ENCODE measurements at regions of chr6 and their contacts with region 1.

Region 1: DNA sequence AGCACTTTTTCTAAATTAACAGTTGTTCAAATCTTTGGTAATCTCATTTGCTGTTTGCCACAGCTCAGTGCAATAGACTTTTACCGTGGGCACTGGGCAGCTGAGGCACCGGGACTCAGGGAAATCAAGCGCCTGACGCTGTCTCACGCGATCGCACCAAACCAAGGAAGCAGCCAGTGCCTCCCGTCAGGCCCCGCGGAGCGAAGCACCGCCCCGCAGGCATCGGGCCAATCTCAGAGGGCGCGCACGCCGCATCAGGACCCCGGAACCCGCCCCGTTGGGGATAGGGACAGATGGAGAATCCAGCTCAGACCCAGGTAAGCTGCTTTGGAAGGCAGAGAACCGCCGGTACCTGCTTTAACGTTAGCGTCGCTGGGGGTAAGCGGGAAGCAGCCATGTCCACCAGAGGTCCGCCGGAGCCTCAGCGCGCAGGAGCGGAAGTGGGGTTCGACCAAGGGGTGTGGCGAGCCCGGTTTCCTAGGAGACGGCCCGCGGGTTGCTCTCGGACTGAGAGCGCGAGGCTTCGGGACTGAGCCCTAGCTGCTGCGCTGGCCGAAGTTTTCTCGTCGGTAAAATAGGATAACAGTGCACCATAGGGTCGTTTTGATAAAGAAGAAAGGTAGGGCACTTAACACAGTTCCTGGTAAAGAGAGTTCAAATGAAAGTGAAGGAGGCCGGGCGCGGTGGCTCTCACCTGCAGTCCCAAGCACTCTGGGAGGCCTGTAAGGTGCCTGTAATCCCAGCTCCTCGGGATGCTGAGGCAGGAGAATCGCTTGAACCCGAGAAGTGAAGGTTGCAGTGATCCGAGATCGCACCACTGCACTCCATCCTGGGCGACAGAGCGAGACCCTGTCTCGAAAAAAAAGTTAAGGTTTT is at the start of gene LYRM2:
- DNase-seq: peak; percentile 96
- ATAC-seq: peak; percentile 97
- H3K4me3 Mint-ChIP-seq: peak within 1 kb of the TSS; percentile 86
- H3K27ac Mint-ChIP-seq: peak within 1 kb of the TSS; percentile 98
- H3K4me1 Mint-ChIP-seq: peaks cover 22% of the 10 kb centered on the region
- H3K27me3 Mint-ChIP-seq: no peaks in the 10 kb centered on the region
- total RNA-seq, gene LYRM2: 24.5 to 27.9 TPM

Region 2: DNA sequence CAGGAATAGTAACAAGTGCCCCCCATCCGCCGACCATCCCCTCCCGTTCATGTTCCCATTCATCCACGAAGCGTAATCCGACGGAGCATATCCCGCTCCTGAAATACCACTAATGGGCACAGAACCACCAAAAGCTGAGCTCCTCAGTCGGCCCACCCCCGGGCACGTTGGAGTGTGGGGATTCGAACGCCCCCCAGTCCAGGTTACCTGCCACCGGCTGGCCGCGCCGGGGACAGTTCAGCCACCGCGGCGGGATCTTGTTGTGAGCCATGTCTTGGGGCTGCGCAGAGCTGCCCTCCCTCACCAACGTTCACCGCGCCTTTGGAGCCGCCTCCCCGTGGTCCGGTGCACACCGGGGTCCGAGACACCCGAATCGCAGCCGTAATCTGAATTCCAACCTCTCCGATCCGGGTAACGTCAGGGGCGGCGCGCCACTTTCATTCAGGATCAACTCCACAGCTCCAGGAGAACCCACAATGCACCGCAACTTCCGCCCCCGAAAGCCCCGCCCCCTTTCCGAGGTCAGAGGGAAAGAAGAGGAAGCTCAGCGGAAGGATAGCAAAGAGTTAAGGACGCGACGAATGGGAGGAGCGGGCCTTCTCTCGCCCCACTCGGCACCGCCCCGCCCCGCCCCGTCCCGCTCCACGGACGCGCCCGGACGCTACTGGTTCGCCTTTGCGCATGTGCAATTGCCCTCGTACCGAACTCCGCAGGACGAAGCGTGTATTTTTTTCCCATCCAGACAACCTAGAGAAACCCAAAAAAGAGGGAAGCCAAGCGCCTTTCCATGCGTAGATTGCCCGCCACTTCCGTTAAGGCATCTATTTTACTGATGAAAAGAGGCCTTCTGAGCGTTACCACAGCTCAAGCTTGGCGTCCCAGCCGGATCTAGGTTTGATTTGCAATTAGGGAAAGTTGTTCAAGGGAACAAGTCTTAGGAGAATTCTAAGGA is 675.1 kb before region 1 on chr6 and contains the start of gene RNGTT:
- CTCF ChIA-PET with region 1: no interaction called
- POLR2A ChIA-PET with region 1: interaction called, 3 read pairs
- intact Hi-C with region 1: loop called in 1 of 2 experiments (anchors 1 kb)
- DNase-seq: peak; percentile 99
- ATAC-seq: peak; percentile 100
- H3K4me3 Mint-ChIP-seq: peak within 1 kb of the TSS; percentile 99
- H3K27ac Mint-ChIP-seq: peak within 1 kb of the TSS; percentile 93
- H3K4me1 Mint-ChIP-seq: peaks cover 45% of the 10 kb centered on the region
- H3K27me3 Mint-ChIP-seq: no peaks in the 10 kb centered on the region
- total RNA-seq, gene RNGTT: 17.5 to 21.5 TPM

Region 3: GRCh38 chr6:89412071-89413005 is 226.2 kb before region 1 on chr6 and contains the start of gene RRAGD:
- CTCF ChIA-PET with region 1: interaction called, 3 read pairs
- POLR2A ChIA-PET with region 1: no interaction called
- intact Hi-C with region 1: loop called in 1 of 2 experiments (anchors 1 kb)
- DNase-seq: peak; percentile 83
- ATAC-seq: peak; percentile 80
- H3K4me3 Mint-ChIP-seq: peak within 1 kb of the TSS; percentile 83
- H3K27ac Mint-ChIP-seq: peak within 1 kb of the TSS; percentile 85
- H3K4me1 Mint-ChIP-seq: peaks cover 20% of the 10 kb centered on the region
- H3K27me3 Mint-ChIP-seq: peaks cover 3% of the 10 kb centered on the region
- total RNA-seq, gene RRAGD: 19.6 to 20.1 TPM

Region 4: DNA sequence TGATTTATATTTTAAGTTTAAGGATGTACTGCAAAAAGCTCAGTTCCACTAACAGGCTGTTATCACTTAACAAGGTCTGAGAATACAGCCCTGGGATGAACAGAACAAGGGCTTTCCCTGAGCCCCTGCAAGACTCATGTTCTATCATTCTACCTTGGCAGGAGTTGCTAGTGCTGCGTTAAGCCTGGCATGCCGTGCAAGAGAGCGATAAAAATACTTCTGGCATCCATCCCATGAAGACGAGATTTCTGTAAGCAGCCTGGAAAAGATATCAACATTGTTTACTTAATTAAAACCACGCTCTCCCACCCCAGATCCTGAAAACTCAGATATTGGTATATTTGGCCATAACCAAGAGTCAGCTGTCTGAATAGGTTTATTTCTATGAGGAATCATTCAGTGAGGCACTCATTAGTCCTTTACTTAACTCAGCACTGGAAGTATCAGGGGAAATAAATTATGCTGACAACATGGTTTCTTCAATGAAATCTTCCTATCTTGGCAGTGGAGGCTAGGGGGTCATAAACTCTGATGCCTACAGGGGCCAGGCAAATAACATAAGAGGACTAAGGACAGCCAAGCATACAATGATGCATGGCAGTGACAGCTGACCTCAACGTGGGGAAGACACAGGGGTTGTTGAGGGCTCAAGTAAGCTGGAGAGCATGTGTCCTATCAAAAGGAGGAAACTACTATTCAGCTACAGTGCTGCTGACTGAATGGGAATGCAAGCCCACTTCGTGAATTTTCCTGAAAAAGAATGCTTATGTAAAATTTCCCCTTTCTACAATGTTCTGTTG is 37.6 kb after region 1 on chr6:
- CTCF ChIA-PET with region 1: no interaction called
- POLR2A ChIA-PET with region 1: no interaction called
- intact Hi-C with region 1: no loop called
- DNase-seq: no peak
- ATAC-seq: no peak
- H3K4me3 Mint-ChIP-seq: no peak overlapping the region
- H3K27ac Mint-ChIP-seq: no peak overlapping the region
- H3K4me1 Mint-ChIP-seq: no peaks in the 10 kb centered on the region
- H3K27me3 Mint-ChIP-seq: no peaks in the 10 kb centered on the region

Region 5: DNA sequence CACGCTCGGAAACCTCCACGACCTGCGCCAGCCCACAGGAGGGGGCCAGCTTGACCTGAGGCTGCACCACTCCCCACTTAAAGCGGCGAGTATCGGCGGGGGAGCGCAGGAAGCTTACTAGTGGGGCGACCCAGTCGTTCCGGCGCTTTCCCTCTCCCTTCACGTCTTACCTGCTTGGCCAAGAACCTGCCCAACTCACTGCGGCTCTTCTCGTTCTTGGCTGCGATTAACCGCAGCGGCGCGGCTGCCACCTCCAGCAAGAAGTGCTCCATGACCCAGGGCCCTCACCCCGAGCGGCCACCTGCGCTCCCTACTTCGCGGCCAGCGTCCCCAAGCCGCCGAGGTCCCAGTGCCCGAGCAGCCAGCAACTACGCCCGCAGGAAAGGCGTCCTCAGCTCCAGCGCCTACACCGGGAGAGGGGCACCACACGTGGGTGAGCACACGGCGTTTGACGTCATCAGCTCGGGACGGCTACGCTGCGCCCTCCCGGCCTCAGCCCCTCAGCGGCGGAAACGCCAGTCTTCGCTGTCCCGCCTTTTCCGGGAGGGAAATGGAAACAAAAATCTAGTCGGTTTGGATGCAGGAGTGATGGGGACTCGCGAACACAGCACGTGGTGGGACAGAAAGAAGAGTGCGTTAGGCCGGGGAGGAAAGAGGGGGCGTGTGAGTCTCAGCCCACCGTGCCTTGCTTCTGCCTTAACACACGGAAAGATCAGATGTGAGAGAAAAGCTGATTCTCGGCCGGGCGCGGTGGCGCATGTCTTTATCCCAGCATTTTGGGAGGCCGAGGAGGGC is 181.0 kb after region 1 on chr6 and contains the start of gene MDN1:
- CTCF ChIA-PET with region 1: interaction called, 4 read pairs
- POLR2A ChIA-PET with region 1: no interaction called
- intact Hi-C with region 1: loop called (anchors 1 to 5 kb)
- DNase-seq: peak; percentile 94
- ATAC-seq: peak; percentile 94
- H3K4me3 Mint-ChIP-seq: peak within 1 kb of the TSS; percentile 81
- H3K27ac Mint-ChIP-seq: peak within 1 kb of the TSS; percentile 96
- H3K4me1 Mint-ChIP-seq: peaks cover 22% of the 10 kb centered on the region
- H3K27me3 Mint-ChIP-seq: no peaks in the 10 kb centered on the region
- total RNA-seq, gene MDN1: 48.6 to 59.5 TPM

Region 6: DNA sequence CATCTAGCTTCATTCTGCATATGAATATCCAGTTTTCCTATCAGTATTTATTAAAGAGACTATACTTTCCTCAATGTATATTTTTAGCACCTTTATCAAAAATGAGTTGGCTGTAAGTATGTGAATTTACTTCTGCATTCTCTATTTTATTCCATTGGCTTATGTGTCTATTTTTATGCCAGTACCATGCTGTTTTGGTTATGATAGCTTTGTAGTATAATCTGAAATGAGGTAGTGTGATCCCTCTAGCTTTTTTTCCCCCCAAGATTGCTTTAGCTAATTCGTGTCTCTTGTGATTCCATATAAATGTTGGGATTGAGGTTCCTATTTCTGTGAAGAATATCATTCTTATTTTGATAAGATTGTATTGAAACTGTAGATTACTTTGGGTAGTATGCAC is 1417.4 kb after region 1 on chr6:
- CTCF ChIA-PET with region 1: no interaction called
- POLR2A ChIA-PET with region 1: interaction called, 18 read pairs
- intact Hi-C with region 1: no loop called
- DNase-seq: no peak
- ATAC-seq: no peak
- H3K4me3 Mint-ChIP-seq: no peak overlapping the region
- H3K27ac Mint-ChIP-seq: no peak overlapping the region
- H3K4me1 Mint-ChIP-seq: no peaks in the 10 kb centered on the region
- H3K27me3 Mint-ChIP-seq: no peaks in the 10 kb centered on the region